K562 (cell line): ENCODE measurements at regions of chr2 and their contacts with region 1.

Region 1: GRCh38 chr2:74876081-74876886 is 42.4 kb downstream of the HK2 start:
- DNase-seq: peak; percentile 57 to 63 (median 60)
- ATAC-seq: peak; percentile 98
- H3K4me3 ChIP-seq: no peak overlapping the region
- H3K27ac ChIP-seq: no peak overlapping the region
- H3K4me1 ChIP-seq: no peaks in the 10 kb centered on the region
- H3K27me3 ChIP-seq: no peaks in the 10 kb centered on the region
- CTCF ChIP-seq: peak; percentile 62 to 76 (median 66)
- EP300 ChIP-seq: no peak
- POLR2A ChIP-seq: no peak
- RAD21 ChIP-seq: peak; percentile 77 to 87

Region 2: DNA sequence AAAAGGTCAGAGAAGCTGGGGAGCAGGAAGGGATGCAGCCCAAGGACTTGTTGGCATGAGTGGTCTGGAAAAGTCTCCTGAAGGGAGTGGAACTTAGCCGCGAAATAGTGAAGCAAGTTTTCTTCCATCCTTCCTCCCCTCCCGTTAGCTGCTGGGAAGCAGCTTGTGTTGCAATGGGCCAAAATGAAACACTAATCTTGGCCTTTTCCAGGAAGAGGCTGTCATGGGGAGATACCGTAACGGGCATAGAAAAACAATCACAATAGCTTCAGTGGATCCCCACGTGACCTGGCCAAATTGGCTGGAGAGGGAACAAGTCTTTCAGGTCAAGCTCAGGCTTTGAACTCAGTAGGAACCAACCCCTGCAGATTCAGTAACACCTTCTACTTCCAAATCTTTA is 172.9 kb before region 1 on chr2:
- CTCF ChIA-PET with region 1: no interaction called
- POLR2A ChIA-PET with region 1: no interaction called
- in situ Hi-C with region 1: loop called (anchors 5 kb)
- intact Hi-C with region 1: no loop called
- DNase-seq: no peak
- ATAC-seq: no peak
- H3K4me3 ChIP-seq: no peak overlapping the region
- H3K27ac ChIP-seq: no peak overlapping the region
- H3K4me1 ChIP-seq: no peaks in the 10 kb centered on the region
- H3K27me3 ChIP-seq: peaks cover 4 to 12% of the 10 kb centered on the region in 2 experiments; a peak in 3 of 5 replicates
- CTCF ChIP-seq: no peak
- EP300 ChIP-seq: no peak
- POLR2A ChIP-seq: no peak
- RAD21 ChIP-seq: no peak

Region 3: DNA sequence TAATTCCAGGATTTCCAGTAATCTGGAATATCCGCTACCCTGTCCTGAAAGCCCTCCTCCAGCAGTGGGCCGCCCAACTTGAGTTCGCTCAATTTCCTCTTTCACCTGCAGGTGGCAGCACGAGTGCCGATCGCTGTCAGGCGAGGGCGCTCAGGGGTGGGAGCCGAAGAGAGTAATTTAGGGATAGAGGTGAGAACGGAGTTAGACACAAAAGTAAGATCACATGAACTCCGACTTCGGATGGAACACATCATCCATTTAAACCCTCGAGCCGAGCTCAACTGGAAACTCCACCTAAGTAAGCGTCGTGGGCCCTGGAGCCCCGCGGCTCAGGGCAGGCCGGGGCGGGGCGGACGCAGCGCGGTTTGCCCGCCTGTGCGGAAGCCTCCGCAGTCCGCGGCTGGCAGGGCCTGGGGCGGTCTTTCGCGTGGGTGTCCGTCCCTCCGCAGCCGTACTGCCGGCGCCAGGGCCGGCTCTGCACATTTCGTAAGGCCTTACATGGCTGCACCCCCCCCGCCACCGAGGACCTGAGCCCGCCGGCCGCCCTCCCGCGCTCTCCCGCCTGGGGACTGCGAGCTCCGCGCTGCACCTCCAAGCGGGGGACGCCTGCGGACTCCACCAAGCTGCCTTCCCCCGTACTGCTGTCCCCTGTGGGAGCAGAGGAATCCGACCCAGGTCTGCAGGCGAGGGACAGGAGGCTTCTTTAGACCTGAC is 161.0 kb before region 1 on chr2:
- CTCF ChIA-PET with region 1: interaction called, 12 read pairs
- POLR2A ChIA-PET with region 1: no interaction called
- in situ Hi-C with region 1: no loop called
- intact Hi-C with region 1: loop called (anchors 1 kb)
- DNase-seq: peak; percentile 81 to 85 (median 84)
- ATAC-seq: peak; percentile 98
- H3K4me3 ChIP-seq: peak overlapping the region; percentile 39
- H3K27ac ChIP-seq: no peak overlapping the region
- H3K4me1 ChIP-seq: peaks cover 0 to 7% of the 10 kb centered on the region in 2 experiments; a peak in 2 of 5 replicates
- H3K27me3 ChIP-seq: peaks cover 14 to 34% of the 10 kb centered on the region in 2 experiments
- CTCF ChIP-seq: peak; percentile 92 to 98 (median 94)
- EP300 ChIP-seq: no peak
- POLR2A ChIP-seq: no peak
- RAD21 ChIP-seq: peak; percentile 75 to 86

Region 4: GRCh38 chr2:74762789-74763188 is 113.5 kb before region 1 on chr2:
- CTCF ChIA-PET with region 1: interaction called, 5 read pairs
- POLR2A ChIA-PET with region 1: no interaction called
- in situ Hi-C with region 1: no loop called
- intact Hi-C with region 1: loop called (anchors 1 kb)
- DNase-seq: peak in 2 of 4 experiments; percentile 15 to 19
- ATAC-seq: peak; percentile 82
- H3K4me3 ChIP-seq: no peak overlapping the region
- H3K27ac ChIP-seq: no peak overlapping the region
- H3K4me1 ChIP-seq: no peaks in the 10 kb centered on the region
- H3K27me3 ChIP-seq: peaks cover 3 to 25% of the 10 kb centered on the region in 2 experiments; a peak in 4 of 5 replicates
- CTCF ChIP-seq: peak; percentile 54 to 70 (median 65)
- EP300 ChIP-seq: no peak
- POLR2A ChIP-seq: no peak
- RAD21 ChIP-seq: peak in 1 of 2 experiments; percentile 69; a peak in 2 of 4 replicates

Region 5: GRCh38 chr2:74833418-74834233 is 42.7 kb before region 1 on chr2 and contains the start of gene HK2:
- CTCF ChIA-PET with region 1: interaction called, 3 read pairs
- POLR2A ChIA-PET with region 1: no interaction called
- in situ Hi-C with region 1: no loop called
- intact Hi-C with region 1: loop called (anchors 5 kb)
- DNase-seq: peak; percentile 92 to 99 (median 99)
- ATAC-seq: peak; percentile 90
- H3K4me3 ChIP-seq: peak within 1 kb of the TSS; percentile 75
- H3K27ac ChIP-seq: peak within 1 kb of the TSS; percentile 83
- H3K4me1 ChIP-seq: peaks cover 29 to 44% of the 10 kb centered on the region in 2 experiments; a peak in 4 of 5 replicates
- H3K27me3 ChIP-seq: no peaks in the 10 kb centered on the region; a peak in 1 of 5 replicates
- CTCF ChIP-seq: no peak
- EP300 ChIP-seq: no peak
- POLR2A ChIP-seq: peak; percentile 70
- RAD21 ChIP-seq: no peak
- polyA plus RNA-seq, gene HK2: 4.7 to 6.4 TPM

Region 6: DNA sequence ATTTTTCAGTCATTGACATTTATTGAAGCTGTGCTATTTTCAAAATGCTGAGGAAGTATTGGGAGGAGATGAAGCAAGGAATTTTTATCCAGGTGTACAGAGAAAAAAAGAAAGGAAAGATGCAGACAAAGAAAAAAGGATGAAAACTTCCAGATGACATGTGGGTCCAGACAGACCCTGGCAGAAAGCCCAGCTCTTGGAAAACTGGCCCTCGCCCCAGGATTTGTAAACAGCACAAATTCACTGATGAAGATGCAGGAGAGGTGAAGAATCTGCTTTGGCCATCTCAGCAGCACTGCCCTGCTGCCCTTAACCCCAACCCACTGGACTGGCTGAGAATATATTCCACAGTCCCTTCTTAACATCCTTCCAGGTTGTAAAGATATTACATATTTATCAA is 310.5 kb after region 1 on chr2:
- CTCF ChIA-PET with region 1: no interaction called
- POLR2A ChIA-PET with region 1: no interaction called
- in situ Hi-C with region 1: no loop called
- intact Hi-C with region 1: no loop called
- DNase-seq: no peak
- ATAC-seq: no peak
- H3K4me3 ChIP-seq: no peak overlapping the region
- H3K27ac ChIP-seq: no peak overlapping the region
- H3K4me1 ChIP-seq: no peaks in the 10 kb centered on the region
- H3K27me3 ChIP-seq: no peaks in the 10 kb centered on the region
- CTCF ChIP-seq: no peak
- EP300 ChIP-seq: no peak
- POLR2A ChIP-seq: no peak
- RAD21 ChIP-seq: no peak